Activated CD4-positive, alpha-beta memory T cell treated with anti-CD3 and anti-CD28 coated beads for 36 hours (primary cell): ENCODE measurements at regions of chr15 and their contacts with region 1.

Region 1: DNA sequence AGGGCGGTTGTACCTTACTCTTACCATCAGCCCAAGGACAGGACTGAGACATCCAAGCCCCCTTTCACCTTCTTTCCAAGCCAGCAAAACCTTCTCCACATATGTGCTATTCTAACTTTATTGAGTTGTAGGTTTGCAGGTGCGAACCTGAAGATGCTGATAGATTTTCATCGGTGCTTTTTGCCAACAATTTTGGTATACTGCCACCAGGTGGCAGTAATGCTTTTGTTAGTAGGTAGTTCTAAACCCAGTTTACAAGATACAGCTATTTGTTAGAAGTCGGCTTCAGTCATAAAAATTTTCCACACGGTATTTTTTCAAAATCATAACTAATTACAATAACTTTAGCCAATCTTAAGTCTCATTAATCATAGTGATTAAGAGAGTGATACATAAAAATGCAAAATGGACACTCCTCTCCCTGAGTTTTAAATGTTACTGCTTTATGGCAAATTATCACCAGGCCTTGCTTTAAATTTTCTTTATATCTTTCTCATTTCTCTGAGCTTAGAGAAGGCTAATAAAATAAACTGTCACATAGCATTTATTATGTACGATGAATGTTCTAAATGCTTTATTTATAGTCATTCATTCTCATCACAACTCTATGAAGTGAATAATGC is 636 bp downstream of the TBC1D21 start:
- DNase-seq: peak; percentile 35
- H3K4me3 Mint-ChIP-seq: no peak overlapping the region
- H3K27ac Mint-ChIP-seq: no peak overlapping the region
- H3K4me1 Mint-ChIP-seq: no peaks in the 10 kb centered on the region
- H3K27me3 Mint-ChIP-seq: peaks cover 35% of the 10 kb centered on the region

Region 2: DNA sequence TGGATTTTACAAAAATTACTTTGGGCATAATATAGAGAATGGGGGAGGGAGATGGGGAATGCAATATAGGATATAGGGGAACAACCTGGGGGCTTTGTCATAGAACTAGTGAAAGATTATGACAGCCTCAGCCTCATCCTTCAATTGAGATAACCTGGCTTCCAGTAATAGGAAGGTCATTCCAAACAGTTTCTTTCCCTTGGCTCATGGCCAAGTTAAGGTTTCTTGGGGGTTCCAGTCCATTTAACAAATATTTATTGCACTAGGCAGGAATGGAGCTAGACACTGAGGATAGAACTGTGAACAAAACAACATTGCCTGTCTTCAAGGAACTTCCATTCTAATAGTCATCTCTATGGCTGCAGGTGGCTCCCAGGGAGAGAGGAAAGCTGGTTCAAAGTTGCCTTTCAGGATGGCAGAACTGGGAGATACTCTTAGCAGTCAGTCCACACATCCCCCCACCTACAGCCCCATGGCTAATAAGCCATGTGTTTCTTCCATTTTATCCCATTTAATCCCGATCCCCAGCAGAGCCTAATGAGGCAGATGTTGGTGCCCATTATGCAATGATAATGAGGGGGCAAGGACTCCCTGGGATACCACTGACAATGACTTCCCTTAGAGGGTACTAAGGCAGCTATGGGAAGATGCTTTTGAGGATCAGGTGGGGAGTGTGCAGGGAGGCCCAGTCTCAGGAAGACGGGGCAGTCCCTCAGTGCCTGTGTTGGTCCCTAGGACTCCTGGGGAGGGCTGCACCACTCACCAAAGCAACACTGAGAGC is 44.7 kb before region 1 on chr15:
- CTCF ChIA-PET with region 1: no interaction called
- POLR2A ChIA-PET with region 1: no interaction called
- intact Hi-C with region 1: no loop called
- DNase-seq: no peak
- H3K4me3 Mint-ChIP-seq: no peak overlapping the region
- H3K27ac Mint-ChIP-seq: no peak overlapping the region
- H3K4me1 Mint-ChIP-seq: no peaks in the 10 kb centered on the region
- H3K27me3 Mint-ChIP-seq: peaks cover 21% of the 10 kb centered on the region

Region 3: GRCh38 chr15:73891328-73892315 is 17.6 kb after region 1 on chr15:
- CTCF ChIA-PET with region 1: interaction called, 28 read pairs
- POLR2A ChIA-PET with region 1: no interaction called
- intact Hi-C with region 1: no loop called
- DNase-seq: no peak
- H3K4me3 Mint-ChIP-seq: no peak overlapping the region
- H3K27ac Mint-ChIP-seq: no peak overlapping the region
- H3K4me1 Mint-ChIP-seq: no peaks in the 10 kb centered on the region
- H3K27me3 Mint-ChIP-seq: peaks cover 2% of the 10 kb centered on the region

Region 4: DNA sequence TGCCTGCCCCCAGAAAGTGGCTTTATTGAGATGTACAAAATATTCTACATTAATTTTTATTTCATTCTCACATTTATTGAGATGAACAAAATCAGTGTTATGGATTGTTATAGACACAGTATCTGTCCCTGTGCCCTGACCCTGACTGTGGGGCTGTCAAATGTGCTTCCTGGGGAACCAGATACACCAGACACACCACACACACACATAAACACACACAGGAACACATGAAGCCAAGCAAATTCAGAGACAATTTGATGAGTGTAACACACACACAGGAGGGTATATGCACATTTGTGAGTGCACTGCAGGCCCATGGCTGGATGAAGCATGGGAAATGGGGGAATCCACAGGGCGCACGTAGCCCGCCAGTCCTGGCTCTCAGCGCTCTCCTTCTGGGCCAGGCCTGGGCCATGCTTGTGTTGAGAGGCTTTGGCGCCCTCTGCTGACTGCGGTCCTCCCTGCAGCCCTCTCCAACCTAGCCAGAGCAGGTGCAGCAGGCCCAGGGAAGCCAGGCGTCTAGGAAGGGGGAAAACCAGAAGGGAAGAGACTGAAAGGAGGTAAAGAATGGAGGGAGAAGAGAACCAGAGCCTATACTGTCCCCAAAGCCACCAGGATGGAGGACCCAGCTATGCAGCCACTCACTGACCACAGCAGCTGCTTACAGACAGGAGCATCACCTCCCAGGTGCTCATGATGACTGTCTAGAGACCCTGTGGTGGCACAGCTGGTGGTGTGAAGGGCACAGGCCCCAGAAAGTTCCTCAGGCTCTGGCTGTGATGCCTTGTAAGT is 34.2 kb after region 1 on chr15:
- CTCF ChIA-PET with region 1: interaction called, 107 read pairs
- POLR2A ChIA-PET with region 1: no interaction called
- intact Hi-C with region 1: loop called (anchors 1 kb)
- DNase-seq: peak; percentile 86
- H3K4me3 Mint-ChIP-seq: no peak overlapping the region
- H3K27ac Mint-ChIP-seq: no peak overlapping the region
- H3K4me1 Mint-ChIP-seq: no peaks in the 10 kb centered on the region
- H3K27me3 Mint-ChIP-seq: no peaks in the 10 kb centered on the region

Region 5: GRCh38 chr15:73927476-73928240 is 53.7 kb after region 1 on chr15:
- CTCF ChIA-PET with region 1: interaction called, 21 read pairs
- POLR2A ChIA-PET with region 1: no interaction called
- intact Hi-C with region 1: no loop called
- DNase-seq: peak; percentile 85
- H3K4me3 Mint-ChIP-seq: peak overlapping the region; percentile 68
- H3K27ac Mint-ChIP-seq: peak overlapping the region; percentile 57
- H3K4me1 Mint-ChIP-seq: peaks cover 41% of the 10 kb centered on the region
- H3K27me3 Mint-ChIP-seq: no peaks in the 10 kb centered on the region